ENCODE measurements at regions of chr11 and their contacts with region 1.

Region 1: GRCh38 chr11:126341760-126342161 is 13.7 kb upstream of the ST3GAL4 start:
- DNase-seq: no peak
- H3K4me3 ChIP-seq: no peak overlapping the region
- H3K27me3 ChIP-seq: no peaks in the 10 kb centered on the region
- CTCF ChIP-seq: no peak

Region 2: GRCh38 chr11:126072141-126072741 is 269.5 kb before region 1 on chr11:
- CTCF ChIA-PET with region 1: no interaction called
- POLR2A ChIA-PET with region 1: no interaction called
- DNase-seq: no peak
- H3K4me3 ChIP-seq: no peak overlapping the region
- H3K27me3 ChIP-seq: peaks cover 6% of the 10 kb centered on the region
- CTCF ChIP-seq: no peak

Region 3: GRCh38 chr11:126403658-126404057 is 61.9 kb after region 1 on chr11:
- CTCF ChIA-PET with region 1: no interaction called
- POLR2A ChIA-PET with region 1: interaction called, 20 read pairs
- DNase-seq: no peak
- H3K4me3 ChIP-seq: no peak overlapping the region
- H3K27me3 ChIP-seq: no peaks in the 10 kb centered on the region
- CTCF ChIP-seq: no peak

Region 4: GRCh38 chr11:126452241-126453101 is 110.7 kb after region 1 on chr11:
- CTCF ChIA-PET with region 1: no interaction called
- POLR2A ChIA-PET with region 1: no interaction called
- DNase-seq: no peak
- H3K4me3 ChIP-seq: no peak overlapping the region
- H3K27me3 ChIP-seq: no peaks in the 10 kb centered on the region
- CTCF ChIP-seq: no peak

Measured in BJ (cell line).